Thyroid gland (tissue), 4 donors: ENCODE measurements at regions of chr1 and their contacts with region 1.

Region 1: DNA sequence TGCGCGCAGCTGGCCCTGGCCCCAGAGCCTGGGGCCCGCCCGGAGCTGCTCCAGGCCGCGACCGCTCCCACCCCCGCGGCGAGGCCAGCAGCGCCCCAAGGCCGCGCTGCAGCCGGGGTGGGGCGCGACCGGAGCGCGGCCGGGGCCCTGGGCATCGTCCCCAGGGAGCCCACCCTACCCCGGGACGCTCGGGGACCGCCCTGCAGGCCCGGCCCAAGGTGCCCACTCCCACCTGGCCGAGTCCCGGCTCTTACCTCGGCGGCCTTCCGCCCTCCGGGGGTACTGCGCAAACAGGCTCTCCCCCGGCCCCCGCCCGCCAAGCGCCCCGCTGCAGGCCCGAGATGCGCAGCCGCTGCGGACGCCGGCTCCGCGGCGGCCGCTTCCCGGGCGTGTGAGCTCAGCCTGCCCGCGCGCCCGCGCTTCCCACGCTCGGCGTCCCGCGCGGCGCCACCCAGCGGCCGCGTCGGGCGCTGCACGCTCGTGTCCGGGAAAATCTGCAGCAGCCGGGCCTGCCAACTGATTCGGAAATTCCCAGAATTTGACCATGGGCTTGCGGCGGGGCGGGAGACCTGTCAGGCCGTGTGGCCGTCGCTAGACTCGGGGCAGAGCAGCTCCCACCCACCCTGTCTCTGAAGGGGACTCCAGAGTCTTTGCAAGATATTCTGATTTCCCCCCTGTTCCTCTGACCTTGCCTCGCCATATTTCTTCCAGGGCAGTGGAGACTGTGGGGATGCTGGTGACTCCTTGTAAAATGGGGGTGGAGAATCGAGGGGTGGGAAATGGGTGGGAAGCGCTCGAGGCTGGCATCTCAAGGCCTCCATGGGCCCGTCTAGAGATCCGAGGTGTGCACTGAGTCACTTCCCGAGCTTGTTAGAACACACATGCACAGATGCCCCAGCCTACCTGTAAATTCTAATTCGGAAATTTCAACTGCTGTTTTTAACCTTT is 41.9 kb downstream of the CD34 start:
- DNase-seq: peak; percentile 79 to 85
- H3K4me3 ChIP-seq: peak overlapping the region; percentile 51 to 86 (median 67)
- H3K27ac ChIP-seq: peak overlapping the region; percentile 96 to 98 (median 97)
- H3K4me1 ChIP-seq: peaks cover 32 to 44% of the 10 kb centered on the region in 2 donors
- H3K27me3 ChIP-seq: no peaks in the 10 kb centered on the region
- CTCF ChIP-seq: peak; percentile 23 to 98 (median 76)
- POLR2A ChIP-seq: peak; percentile 19 to 91

Region 2: GRCh38 chr1:207825719-207826556 is 43.1 kb before region 1 on chr1:
- intact Hi-C with region 1: loop called (anchors 2 kb)
- DNase-seq: peak; percentile 36 to 52
- H3K4me3 ChIP-seq: peak overlapping the region in 1 of 3 donors; percentile 9
- H3K27ac ChIP-seq: peak overlapping the region; percentile 97 to 100 (median 99)
- H3K4me1 ChIP-seq: peaks cover 66 to 68% of the 10 kb centered on the region in 2 donors
- H3K27me3 ChIP-seq: no peaks in the 10 kb centered on the region
- CTCF ChIP-seq: no peak
- POLR2A ChIP-seq: peak in 1 of 2 donors; percentile 18